Activated B cell treated with CpG ODN at 0.5 μM for 24 hours (primary cell): ENCODE measurements at regions of chr5 and their contacts with region 1.

Region 1: GRCh38 chr5:73565139-73565968 is at the starts of genes ANKRA2 and UTP15:
- DNase-seq: peak; percentile 98
- ATAC-seq: peak; percentile 96
- H3K4me3 Mint-ChIP-seq: peak within 1 kb of the TSS; percentile 99
- H3K27ac Mint-ChIP-seq: peak within 1 kb of the TSS; percentile 100
- H3K4me1 Mint-ChIP-seq: peaks cover 37% of the 10 kb centered on the region
- H3K27me3 Mint-ChIP-seq: no peaks in the 10 kb centered on the region
- CTCF ChIP-seq: no peak
- total RNA-seq, gene ANKRA2: 17.7 and 22.9 TPM in 2 replicates
- total RNA-seq, gene UTP15: 35.7 and 40.4 TPM in 2 replicates

Region 2: GRCh38 chr5:72307968-72308852 is 1257.1 kb before region 1 on chr5:
- CTCF ChIA-PET with region 1: no interaction called
- POLR2A ChIA-PET with region 1: no interaction called
- intact Hi-C with region 1: loop called (anchors 1 kb)
- DNase-seq: peak; percentile 95
- ATAC-seq: peak; percentile 95
- H3K4me3 Mint-ChIP-seq: peak overlapping the region; percentile 92
- H3K27ac Mint-ChIP-seq: peak overlapping the region; percentile 97
- H3K4me1 Mint-ChIP-seq: peaks cover 46% of the 10 kb centered on the region
- H3K27me3 Mint-ChIP-seq: no peaks in the 10 kb centered on the region
- CTCF ChIP-seq: peak; percentile 24

Region 3: DNA sequence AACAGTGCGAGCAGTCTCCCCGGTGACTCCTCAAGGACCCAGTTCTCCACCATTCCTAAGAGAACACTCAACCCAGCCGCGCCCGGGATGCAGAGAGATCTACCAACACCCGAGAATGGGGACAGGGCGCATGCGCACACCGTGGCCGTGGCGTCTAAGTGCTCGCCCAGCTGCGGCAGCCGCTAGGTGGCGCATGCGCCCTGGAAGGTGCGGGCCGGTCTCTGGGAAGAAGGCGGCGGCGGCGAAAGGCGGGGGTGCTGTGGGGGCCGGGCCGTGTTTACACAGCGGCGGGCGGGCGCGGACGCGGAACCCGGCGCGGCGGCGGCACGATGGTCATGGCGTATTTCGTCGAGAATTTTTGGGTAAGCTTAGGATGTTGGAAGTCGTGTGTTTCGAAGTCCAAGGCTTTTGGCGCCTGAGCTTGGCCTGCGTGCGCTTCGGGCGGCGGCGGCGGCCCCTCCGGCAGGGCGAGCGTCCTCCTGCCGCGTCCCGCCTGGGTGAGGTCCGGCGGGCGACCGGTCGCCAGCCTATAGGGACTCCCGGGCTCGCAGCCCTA is 609.5 kb before region 1 on chr5 and contains the start of gene FCHO2:
- CTCF ChIA-PET with region 1: no interaction called
- POLR2A ChIA-PET with region 1: no interaction called
- intact Hi-C with region 1: loop called (anchors 1 kb)
- DNase-seq: peak; percentile 96
- ATAC-seq: peak; percentile 96
- H3K4me3 Mint-ChIP-seq: peak within 1 kb of the TSS; percentile 92
- H3K27ac Mint-ChIP-seq: peak within 1 kb of the TSS; percentile 76
- H3K4me1 Mint-ChIP-seq: peaks cover 14% of the 10 kb centered on the region
- H3K27me3 Mint-ChIP-seq: peaks cover 22% of the 10 kb centered on the region
- CTCF ChIP-seq: no peak
- total RNA-seq, gene FCHO2: 3.2 and 5.3 TPM in 2 replicates

Region 4: GRCh38 chr5:73519531-73520283 is 45.6 kb before region 1 on chr5:
- CTCF ChIA-PET with region 1: no interaction called
- POLR2A ChIA-PET with region 1: no interaction called
- intact Hi-C with region 1: loop called (anchors 1 kb)
- DNase-seq: peak; percentile 21
- ATAC-seq: peak; percentile 99
- H3K4me3 Mint-ChIP-seq: no peak overlapping the region
- H3K27ac Mint-ChIP-seq: no peak overlapping the region
- H3K4me1 Mint-ChIP-seq: peaks cover 4% of the 10 kb centered on the region
- H3K27me3 Mint-ChIP-seq: no peaks in the 10 kb centered on the region
- CTCF ChIP-seq: no peak

Region 5: DNA sequence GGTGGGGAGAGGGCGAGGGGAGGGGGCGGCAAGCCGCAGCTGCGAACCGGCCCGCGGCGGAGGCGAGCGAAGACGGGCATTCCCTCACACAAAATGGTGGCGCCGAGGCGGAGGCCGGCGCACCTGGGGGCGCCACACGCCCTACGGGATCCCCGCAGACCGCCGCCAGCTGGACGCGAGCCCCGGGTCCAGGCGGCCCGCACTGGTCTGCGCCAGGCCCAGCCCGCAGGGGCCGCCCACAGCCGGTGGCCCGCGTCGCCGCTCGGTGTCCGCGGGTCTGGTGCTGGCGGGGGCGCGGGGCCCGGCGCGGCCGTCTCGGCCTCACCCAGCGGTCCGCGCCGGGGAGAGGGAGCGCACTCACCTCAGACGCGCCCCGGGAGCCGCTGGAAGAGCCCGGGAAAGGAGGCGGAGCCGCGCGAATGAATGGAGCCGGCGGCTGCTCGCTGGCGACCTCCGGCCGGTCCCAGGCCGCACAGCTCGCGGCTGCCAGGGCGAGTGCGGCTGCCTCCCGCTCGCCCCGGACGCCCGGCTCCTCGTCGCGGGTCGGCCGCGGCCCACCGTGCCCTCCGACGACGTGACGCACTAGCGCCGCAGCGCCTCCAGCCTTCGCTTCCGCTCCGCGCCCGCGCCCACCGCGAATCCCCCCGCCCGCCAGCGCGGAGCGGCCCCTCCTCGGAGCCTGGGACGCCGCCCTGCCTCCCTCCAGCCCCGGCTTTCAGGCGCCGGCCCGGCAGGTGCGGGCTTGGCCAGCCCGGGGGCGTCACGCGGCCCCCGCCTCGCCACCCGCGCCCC is 1300.6 kb after region 1 on chr5 and contains the start of gene FAM169A:
- CTCF ChIA-PET with region 1: no interaction called
- POLR2A ChIA-PET with region 1: no interaction called
- intact Hi-C with region 1: loop called (anchors 10 kb)
- DNase-seq: peak; percentile 57
- ATAC-seq: peak; percentile 77
- H3K4me3 Mint-ChIP-seq: peak within 1 kb of the TSS; percentile 87
- H3K27ac Mint-ChIP-seq: peak within 1 kb of the TSS; percentile 80
- H3K4me1 Mint-ChIP-seq: peaks cover 17% of the 10 kb centered on the region
- H3K27me3 Mint-ChIP-seq: peaks cover 27% of the 10 kb centered on the region
- CTCF ChIP-seq: no peak
- total RNA-seq, gene FAM169A: 8.2 TPM in 2 replicates

Region 6: GRCh38 chr5:75511435-75512384 is 1946.4 kb after region 1 on chr5 and contains the starts of genes CERT1 and POLK:
- CTCF ChIA-PET with region 1: no interaction called
- POLR2A ChIA-PET with region 1: no interaction called
- intact Hi-C with region 1: loop called (anchors 1 kb)
- DNase-seq: peak; percentile 85
- ATAC-seq: peak; percentile 90
- H3K4me3 Mint-ChIP-seq: peak within 1 kb of the TSS; percentile 95
- H3K27ac Mint-ChIP-seq: peak within 1 kb of the TSS; percentile 95
- H3K4me1 Mint-ChIP-seq: peaks cover 70% of the 10 kb centered on the region
- H3K27me3 Mint-ChIP-seq: no peaks in the 10 kb centered on the region
- CTCF ChIP-seq: no peak
- total RNA-seq, gene CERT1: 39.1 and 49.5 TPM in 2 replicates
- total RNA-seq, gene POLK: 29.0 and 34.0 TPM in 2 replicates